Activated CD4-positive, alpha-beta T cell treated with anti-CD3 and anti-CD28 coated beads for 36 hours (primary cell): ENCODE measurements at regions of chr1 and their contacts with region 1.

Region 1: GRCh38 chr1:162357681-162358266 is 18.9 kb downstream of the SPATA46 start:
- DNase-seq: no peak
- ATAC-seq: no peak
- H3K4me3 Mint-ChIP-seq: no peak overlapping the region
- H3K27ac Mint-ChIP-seq: no peak overlapping the region
- H3K4me1 Mint-ChIP-seq: no peaks in the 10 kb centered on the region
- H3K27me3 Mint-ChIP-seq: no peaks in the 10 kb centered on the region

Region 2: DNA sequence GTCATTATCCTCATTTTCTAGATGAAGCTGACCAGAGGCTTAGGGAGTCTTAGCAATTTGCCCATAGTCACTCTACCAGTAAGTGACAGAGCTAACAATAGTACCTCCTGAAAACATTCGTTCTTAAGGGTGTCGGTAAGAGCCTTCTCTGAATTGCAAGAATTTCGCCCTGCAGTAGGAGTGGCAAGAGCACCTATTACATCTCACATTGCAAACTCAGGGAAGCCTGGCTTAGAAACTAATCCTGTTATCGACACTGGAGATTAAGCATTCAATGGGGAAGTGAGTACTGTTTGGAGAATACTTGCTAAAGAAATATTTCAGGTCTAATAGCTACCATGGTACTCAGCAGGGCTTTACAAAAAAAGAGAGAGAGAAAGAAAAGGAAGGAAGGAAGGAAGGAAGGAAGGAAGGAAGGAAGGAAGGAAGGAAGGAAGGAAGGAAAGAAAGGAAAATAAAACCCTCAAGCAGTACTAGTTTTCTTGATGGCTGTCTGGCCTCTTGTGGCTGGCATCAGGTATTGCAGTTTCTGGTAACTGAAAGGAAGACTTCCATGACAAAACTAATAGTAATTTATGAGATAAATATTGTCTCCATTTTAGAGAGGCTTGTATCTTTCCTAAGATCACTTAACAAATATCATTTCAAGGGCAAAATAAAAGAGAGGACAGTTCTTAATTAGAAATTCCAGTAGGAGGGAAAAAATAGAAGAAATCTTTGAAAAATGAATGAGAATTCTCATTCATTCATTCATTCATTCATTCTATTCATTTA is 34.2 kb after region 1 on chr1:
- CTCF ChIA-PET with region 1: interaction called, 4 read pairs
- POLR2A ChIA-PET with region 1: no interaction called
- intact Hi-C with region 1: loop called in 1 of 2 experiments (anchors 2 kb)
- DNase-seq: peak; percentile 35
- ATAC-seq: no peak
- H3K4me3 Mint-ChIP-seq: no peak overlapping the region
- H3K27ac Mint-ChIP-seq: no peak overlapping the region
- H3K4me1 Mint-ChIP-seq: no peaks in the 10 kb centered on the region
- H3K27me3 Mint-ChIP-seq: peaks cover 26% of the 10 kb centered on the region

Region 3: DNA sequence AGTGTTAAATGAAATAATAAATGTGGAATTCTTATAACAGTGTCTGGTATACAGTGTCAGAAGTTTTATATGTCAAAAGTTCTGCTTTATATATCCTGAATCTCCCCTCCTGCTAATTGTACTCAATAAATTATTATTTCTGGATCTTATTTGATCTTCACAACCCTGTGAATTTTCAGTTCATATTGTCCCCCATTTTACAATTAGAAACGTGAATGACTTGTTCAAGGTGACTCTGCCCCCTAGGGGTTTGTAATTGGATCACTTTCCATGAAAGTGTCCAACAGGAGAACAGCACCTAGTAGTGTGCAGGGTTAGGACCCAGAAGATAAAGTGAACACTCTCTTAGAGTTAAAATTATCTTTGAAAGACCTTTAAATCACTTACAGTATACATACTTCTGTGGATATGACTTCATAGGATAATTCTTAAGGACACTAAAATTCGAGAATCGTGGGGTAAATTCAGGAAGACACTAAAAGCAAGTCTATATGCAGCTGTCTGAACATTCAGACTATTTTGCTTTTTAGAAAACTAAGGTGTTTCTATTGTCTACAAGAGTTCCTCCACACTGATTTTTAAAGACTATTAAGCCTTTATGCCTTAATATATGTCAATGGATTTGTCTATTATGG is 270.0 kb after region 1 on chr1:
- CTCF ChIA-PET with region 1: interaction called, 4 read pairs
- POLR2A ChIA-PET with region 1: no interaction called
- intact Hi-C with region 1: loop called in 1 of 2 experiments (anchors 5 kb)
- DNase-seq: no peak
- ATAC-seq: peak; percentile 64
- H3K4me3 Mint-ChIP-seq: no peak overlapping the region
- H3K27ac Mint-ChIP-seq: no peak overlapping the region
- H3K4me1 Mint-ChIP-seq: peaks cover 2% of the 10 kb centered on the region
- H3K27me3 Mint-ChIP-seq: peaks cover 15% of the 10 kb centered on the region